Mammary epithelial cell (primary cell): ENCODE measurements at regions of chr19 and their contacts with region 1.

Region 1: DNA sequence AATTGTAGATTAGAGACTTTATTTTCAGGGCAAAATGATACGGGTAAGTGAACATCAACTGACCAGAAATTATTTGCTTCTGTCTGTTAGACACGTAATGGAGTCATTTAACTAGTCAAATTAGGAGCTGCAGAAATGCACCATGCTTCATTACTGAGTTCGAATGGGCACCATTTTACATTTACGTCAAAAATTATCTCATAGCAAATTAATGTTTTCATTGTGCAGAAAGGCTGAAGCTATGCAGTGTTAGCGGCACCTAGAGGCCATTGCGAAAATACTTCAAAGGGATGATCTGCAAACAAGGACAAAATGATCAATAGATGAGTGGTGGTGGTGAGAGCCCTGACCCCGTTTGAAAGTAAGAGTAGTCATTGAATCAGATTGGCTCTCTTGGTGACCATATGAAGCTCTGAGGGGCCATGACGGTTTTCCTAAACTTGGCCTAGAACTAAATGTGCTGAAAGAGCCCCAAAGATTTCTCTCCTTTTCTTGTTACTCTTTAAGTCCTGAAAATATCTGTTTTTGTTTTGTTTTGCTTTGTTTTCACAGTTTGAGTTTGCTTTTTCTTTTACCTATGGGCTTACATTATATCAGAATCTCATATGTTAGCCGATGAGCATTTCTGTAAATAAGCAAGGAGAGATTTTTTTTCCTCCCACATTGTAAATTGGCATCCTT is 277.9 kb downstream of the ZNF536 start:
- DNase-seq: peak; percentile 33
- H3K4me3 ChIP-seq: no peak overlapping the region
- H3K27ac ChIP-seq: no peak overlapping the region
- H3K4me1 ChIP-seq: no peaks in the 10 kb centered on the region
- H3K27me3 ChIP-seq: no peaks in the 10 kb centered on the region
- CTCF ChIP-seq: peak; percentile 76 to 81

Region 2: DNA sequence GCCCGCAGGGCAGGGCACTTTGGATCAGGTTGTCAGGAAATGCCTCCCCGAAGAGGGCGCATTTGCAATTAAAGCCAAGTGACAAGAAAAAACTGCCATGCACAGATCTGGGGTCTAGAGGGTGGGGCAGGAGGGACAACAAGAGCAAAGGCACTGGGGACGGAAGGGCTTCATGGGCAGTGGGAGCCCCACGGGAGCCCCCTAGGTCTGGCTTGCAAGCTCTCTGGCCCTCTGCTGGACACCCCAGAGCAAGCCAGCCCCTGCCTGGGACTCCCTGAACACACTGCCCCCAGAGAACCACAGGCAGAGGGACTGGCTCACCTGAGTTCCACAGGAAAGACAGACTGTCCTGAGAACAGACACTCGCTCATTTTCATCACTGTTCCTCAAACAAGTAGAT is 904.8 kb before region 1 on chr19:
- CTCF ChIA-PET with region 1: no interaction called
- dilution Hi-C with region 1: no loop called
- in situ Hi-C with region 1: loop called (anchors 25 kb)
- intact Hi-C with region 1: no loop called
- DNase-seq: no peak
- H3K4me3 ChIP-seq: no peak overlapping the region
- H3K27ac ChIP-seq: no peak overlapping the region
- H3K4me1 ChIP-seq: no peaks in the 10 kb centered on the region
- H3K27me3 ChIP-seq: no peaks in the 10 kb centered on the region
- CTCF ChIP-seq: no peak

Region 3: GRCh38 chr19:29873024-29873800 is 776.9 kb before region 1 on chr19:
- CTCF ChIA-PET with region 1: no interaction called
- dilution Hi-C with region 1: no loop called
- in situ Hi-C with region 1: loop called in 1 of 2 experiments (anchors 25 kb)
- intact Hi-C with region 1: no loop called
- DNase-seq: no peak
- H3K4me3 ChIP-seq: peak overlapping the region; percentile 28 to 46 (median 33)
- H3K27ac ChIP-seq: no peak overlapping the region
- H3K4me1 ChIP-seq: peaks cover 11% of the 10 kb centered on the region
- H3K27me3 ChIP-seq: no peaks in the 10 kb centered on the region
- CTCF ChIP-seq: peak; percentile 33 to 66

Region 4: DNA sequence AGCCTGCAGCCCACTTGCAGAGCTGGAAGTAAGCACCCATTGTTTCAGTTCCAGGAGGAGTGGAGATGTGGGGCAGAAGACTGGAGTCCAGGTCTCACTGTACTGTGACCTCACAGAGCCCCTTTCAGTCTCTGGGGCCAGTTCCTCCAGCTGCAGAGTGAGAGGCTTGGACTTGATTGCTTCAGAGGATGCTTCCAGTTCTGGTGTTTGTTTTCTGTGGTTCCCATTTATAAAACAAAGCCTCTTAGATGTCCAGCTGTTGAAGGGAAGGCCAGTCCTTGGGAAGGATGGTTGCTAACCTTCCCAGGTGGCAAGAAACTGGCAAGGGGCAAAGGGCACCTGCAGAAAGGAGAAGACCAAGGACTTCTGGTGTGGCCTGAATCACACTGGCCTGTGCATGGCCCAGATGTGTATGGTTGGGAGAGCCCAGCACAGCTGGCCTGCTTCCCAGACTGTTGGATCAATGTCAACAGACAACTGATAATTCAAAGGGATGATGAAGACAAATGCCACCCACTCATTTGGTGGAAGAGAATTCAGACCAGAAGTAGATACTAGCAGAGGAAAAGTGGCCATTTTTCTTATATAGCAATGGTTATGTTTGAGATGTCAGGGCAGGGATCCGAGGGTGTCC is 59.4 kb before region 1 on chr19:
- CTCF ChIA-PET with region 1: no interaction called
- dilution Hi-C with region 1: loop called (anchors 5 kb)
- in situ Hi-C with region 1: no loop called
- intact Hi-C with region 1: no loop called
- DNase-seq: no peak
- H3K4me3 ChIP-seq: no peak overlapping the region
- H3K27ac ChIP-seq: no peak overlapping the region
- H3K4me1 ChIP-seq: no peaks in the 10 kb centered on the region
- H3K27me3 ChIP-seq: no peaks in the 10 kb centered on the region
- CTCF ChIP-seq: no peak

Region 5: GRCh38 chr19:30602661-30603350 is 47.3 kb before region 1 on chr19:
- CTCF ChIA-PET with region 1: no interaction called
- dilution Hi-C with region 1: no loop called
- in situ Hi-C with region 1: no loop called
- intact Hi-C with region 1: no loop called
- DNase-seq: no peak
- H3K4me3 ChIP-seq: no peak overlapping the region
- H3K27ac ChIP-seq: no peak overlapping the region
- H3K4me1 ChIP-seq: no peaks in the 10 kb centered on the region
- H3K27me3 ChIP-seq: no peaks in the 10 kb centered on the region
- CTCF ChIP-seq: no peak

Region 6: GRCh38 chr19:31392464-31392863 is 742.4 kb after region 1 on chr19:
- CTCF ChIA-PET with region 1: no interaction called
- dilution Hi-C with region 1: no loop called
- in situ Hi-C with region 1: no loop called
- intact Hi-C with region 1: no loop called
- DNase-seq: no peak
- H3K4me3 ChIP-seq: no peak overlapping the region
- H3K27ac ChIP-seq: no peak overlapping the region
- H3K4me1 ChIP-seq: no peaks in the 10 kb centered on the region
- H3K27me3 ChIP-seq: no peaks in the 10 kb centered on the region
- CTCF ChIP-seq: no peak

Region 7: GRCh38 chr19:32570081-32570785 is 1920.2 kb after region 1 on chr19:
- CTCF ChIA-PET with region 1: no interaction called
- dilution Hi-C with region 1: no loop called
- in situ Hi-C with region 1: loop called in 1 of 2 experiments (anchors 25 kb)
- intact Hi-C with region 1: no loop called
- DNase-seq: peak; percentile 49
- H3K4me3 ChIP-seq: no peak overlapping the region
- H3K27ac ChIP-seq: no peak overlapping the region
- H3K4me1 ChIP-seq: no peaks in the 10 kb centered on the region
- H3K27me3 ChIP-seq: peaks cover 3% of the 10 kb centered on the region
- CTCF ChIP-seq: peak; percentile 65 to 78